ENCODE measurements at regions of chr1 and their contacts with region 1.

Region 1: DNA sequence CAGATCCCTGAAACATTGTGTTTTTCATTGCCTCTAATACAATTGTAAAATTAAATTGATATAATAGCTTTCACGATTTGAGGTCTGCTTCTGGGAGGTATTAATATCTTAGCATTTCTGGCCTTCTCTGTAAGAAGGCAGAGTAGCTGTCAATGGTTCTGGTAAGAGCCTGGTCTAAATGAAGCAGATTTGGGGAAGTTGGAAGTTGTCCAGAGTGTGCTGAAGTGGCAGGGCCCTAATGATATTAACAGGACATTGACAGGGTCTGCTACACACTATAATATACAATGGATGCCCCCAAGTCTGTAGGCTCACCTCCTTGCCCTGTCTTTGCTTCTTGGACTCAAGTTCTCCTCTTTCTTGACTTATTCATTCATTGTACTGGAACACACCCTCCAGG is 99.5 kb downstream of the C4BPA start:
- DNase-seq: no peak
- H3K4me3 ChIP-seq: no peak overlapping the region
- H3K27ac ChIP-seq: no peak overlapping the region
- H3K4me1 ChIP-seq: no peaks in the 10 kb centered on the region
- H3K27me3 ChIP-seq: no peaks in the 10 kb centered on the region
- CTCF ChIP-seq: no peak

Region 2: GRCh38 chr1:206575165-206575893 is 628.2 kb before region 1 on chr1:
- CTCF ChIA-PET with region 1: no interaction called
- dilution Hi-C with region 1: no loop called
- in situ Hi-C with region 1: no loop called
- intact Hi-C with region 1: no loop called
- DNase-seq: no peak
- H3K4me3 ChIP-seq: no peak overlapping the region
- H3K27ac ChIP-seq: no peak overlapping the region
- H3K4me1 ChIP-seq: no peaks in the 10 kb centered on the region
- H3K27me3 ChIP-seq: no peaks in the 10 kb centered on the region
- CTCF ChIP-seq: no peak

Region 3: GRCh38 chr1:207188901-207189300 is 14.6 kb before region 1 on chr1:
- CTCF ChIA-PET with region 1: no interaction called
- dilution Hi-C with region 1: no loop called
- in situ Hi-C with region 1: no loop called
- intact Hi-C with region 1: no loop called
- DNase-seq: no peak
- H3K4me3 ChIP-seq: no peak overlapping the region
- H3K27ac ChIP-seq: no peak overlapping the region
- H3K4me1 ChIP-seq: no peaks in the 10 kb centered on the region
- H3K27me3 ChIP-seq: no peaks in the 10 kb centered on the region
- CTCF ChIP-seq: no peak

Region 4: GRCh38 chr1:207248544-207249198 is 45.1 kb after region 1 on chr1:
- CTCF ChIA-PET with region 1: no interaction called
- dilution Hi-C with region 1: loop called (anchors 5 kb)
- in situ Hi-C with region 1: no loop called
- intact Hi-C with region 1: no loop called
- DNase-seq: peak; percentile 48
- H3K4me3 ChIP-seq: no peak overlapping the region
- H3K27ac ChIP-seq: no peak overlapping the region
- H3K4me1 ChIP-seq: no peaks in the 10 kb centered on the region
- H3K27me3 ChIP-seq: no peaks in the 10 kb centered on the region
- CTCF ChIP-seq: no peak

Measured in mammary epithelial cell (primary cell).